ENCODE measurements at regions of chr22 and their contacts with region 1.

Region 1: DNA sequence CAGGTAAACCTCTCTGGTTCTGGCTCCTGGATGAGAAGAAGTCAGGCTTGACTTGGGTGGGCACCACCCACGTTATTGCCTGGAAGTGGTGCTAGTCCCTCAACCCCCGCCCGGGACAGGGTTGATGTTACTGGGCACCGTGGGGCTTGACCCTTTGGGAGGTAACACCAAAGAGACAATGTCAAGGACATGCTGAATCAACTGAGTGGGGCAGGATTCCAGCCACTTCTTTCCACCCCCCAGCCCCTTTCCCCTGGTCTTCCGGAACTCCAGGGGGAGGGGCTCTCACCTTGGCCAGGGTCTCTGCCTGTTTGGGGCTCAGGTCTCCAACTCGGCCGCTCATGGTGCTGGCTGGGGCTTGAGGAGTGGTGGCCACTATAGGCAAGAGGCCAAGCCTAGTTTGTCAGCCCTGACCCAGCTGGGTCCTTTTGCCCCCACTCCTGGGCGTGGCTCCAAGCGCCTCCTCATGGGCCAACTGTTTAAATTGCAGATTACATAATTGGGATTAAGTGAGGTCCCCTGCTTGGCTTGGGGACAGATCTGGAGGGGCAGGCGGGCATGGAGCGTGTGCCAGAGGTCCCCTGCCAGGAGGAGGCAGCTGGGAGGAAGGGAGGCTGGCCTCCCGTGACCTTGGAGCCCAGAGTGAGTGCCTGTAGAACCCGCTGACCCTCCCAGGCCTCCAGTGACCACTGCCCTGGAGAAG is at the start of gene SEC14L3:
- DNase-seq: no peak
- ATAC-seq: no peak
- H3K4me3 ChIP-seq: no peak within 1 kb of the TSS
- H3K27ac ChIP-seq: no peak within 1 kb of the TSS
- H3K4me1 ChIP-seq: no peaks in the 10 kb centered on the region
- H3K27me3 ChIP-seq: peaks cover 0 to 2% of the 10 kb centered on the region in 2 donors
- total RNA-seq, gene SEC14L3: not detected

Region 2: DNA sequence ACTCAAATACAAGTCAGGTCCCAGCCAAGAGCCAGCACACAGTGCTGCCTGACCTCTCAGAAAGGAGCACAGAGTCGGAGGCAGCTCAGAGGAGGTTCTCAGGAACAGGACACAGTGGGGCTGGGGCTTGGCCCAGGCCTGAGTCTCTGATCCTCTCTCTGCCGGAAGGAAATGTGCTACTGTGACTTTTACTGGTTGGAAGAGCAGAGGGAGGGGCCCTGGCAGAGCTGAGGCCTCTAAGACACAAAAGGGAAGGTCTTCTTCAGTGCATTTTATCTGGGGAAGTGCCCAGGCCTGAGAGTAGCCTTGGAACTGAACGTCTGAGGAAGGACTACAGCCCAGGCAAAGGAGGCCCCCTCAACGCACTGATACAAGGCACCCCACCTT is 166.3 kb before region 1 on chr22:
- intact Hi-C with region 1: no loop called
- DNase-seq: peak in 1 of 2 donors; percentile 84
- ATAC-seq: peak; percentile 74
- H3K4me3 ChIP-seq: no peak overlapping the region
- H3K27ac ChIP-seq: peak overlapping the region; percentile 61 to 90
- H3K4me1 ChIP-seq: peaks cover 5 to 11% of the 10 kb centered on the region in 2 donors
- H3K27me3 ChIP-seq: no peaks in the 10 kb centered on the region

Region 3: DNA sequence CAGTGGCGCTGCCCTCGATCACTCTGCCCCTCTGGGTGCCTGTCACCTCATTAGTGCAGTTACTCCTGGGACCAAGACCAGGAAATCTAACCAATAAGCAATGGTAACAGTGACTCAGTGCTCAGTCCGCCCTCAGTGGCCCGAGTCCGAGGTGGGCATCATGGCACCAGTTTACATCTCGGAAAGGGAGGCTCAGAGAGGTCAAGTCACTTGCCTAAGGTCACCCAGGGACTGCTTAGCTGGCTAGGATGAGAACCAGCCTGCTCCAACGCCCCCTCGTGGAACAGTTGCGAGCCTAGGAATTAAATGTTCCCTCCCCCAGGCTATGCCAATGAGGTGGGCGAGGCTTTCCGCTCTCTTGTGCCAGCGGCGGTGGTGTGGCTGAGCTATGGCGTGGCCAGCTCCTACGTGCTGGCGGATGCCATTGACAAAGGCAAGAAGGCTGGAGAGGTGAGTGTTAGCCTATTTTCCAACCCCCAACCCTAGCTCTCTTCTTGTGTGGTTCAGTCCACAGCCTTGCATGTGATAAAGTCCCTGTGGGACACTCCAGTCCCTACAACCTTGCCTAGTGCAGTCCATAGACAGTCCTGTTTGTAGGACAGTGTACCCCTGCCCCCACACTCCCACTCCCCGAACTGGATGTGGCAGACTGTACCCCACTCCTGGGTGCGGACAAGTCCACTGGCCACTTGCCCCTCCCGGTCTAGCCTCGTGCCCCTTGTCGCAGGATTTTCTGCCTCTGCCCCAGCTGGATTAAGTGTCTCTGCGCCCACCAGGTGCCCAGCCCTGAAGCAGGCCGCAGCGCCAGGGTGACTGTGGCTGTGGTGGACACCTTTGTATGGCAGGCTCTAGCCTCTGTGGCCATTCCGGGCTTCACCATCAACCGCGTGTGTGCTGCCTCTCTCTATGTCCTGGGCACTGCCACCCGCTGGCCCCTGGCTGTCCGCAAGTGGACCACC is 45.1 kb before region 1 on chr22:
- intact Hi-C with region 1: no loop called
- DNase-seq: peak; percentile 91 to 94
- ATAC-seq: peak; percentile 17
- H3K4me3 ChIP-seq: no peak overlapping the region
- H3K27ac ChIP-seq: no peak overlapping the region
- H3K4me1 ChIP-seq: no peaks in the 10 kb centered on the region
- H3K27me3 ChIP-seq: no peaks in the 10 kb centered on the region

Region 4: DNA sequence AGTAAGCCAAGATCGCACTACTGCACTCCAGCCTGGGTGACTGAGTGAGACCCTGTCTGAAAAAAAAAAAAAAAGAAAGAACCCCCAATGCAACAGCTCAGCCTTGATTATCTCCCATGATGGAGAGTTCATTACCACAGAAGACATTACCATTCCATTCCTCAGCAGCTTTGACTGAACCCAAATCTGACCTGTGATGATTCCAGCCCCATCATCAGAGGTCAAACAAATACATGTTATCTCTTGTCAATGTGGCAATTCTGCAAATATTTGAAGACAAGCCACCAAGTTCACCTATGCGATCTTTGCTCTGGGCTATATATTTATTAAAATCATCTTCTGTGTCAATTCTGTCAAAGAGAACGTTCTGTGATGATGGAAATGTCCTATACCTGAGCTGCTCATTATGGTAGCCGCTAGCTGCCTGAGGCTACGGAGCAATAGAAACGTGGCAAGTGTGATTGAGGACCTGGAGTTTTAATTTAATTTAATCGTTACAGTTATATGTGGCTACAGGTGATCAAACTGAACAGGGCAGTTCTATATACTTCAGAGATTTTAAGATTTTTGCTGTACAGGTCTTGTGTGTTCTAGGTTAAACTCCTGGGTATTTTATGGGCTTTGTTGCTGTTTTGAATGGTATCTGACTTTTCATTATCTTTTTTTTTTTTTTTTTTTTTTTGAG is 25.8 kb after region 1 on chr22:
- intact Hi-C with region 1: loop called in 1 of 2 experiments (anchors 2 kb)
- DNase-seq: no peak
- ATAC-seq: no peak
- H3K4me3 ChIP-seq: no peak overlapping the region
- H3K27ac ChIP-seq: no peak overlapping the region
- H3K4me1 ChIP-seq: no peaks in the 10 kb centered on the region
- H3K27me3 ChIP-seq: no peaks in the 10 kb centered on the region

Region 5: DNA sequence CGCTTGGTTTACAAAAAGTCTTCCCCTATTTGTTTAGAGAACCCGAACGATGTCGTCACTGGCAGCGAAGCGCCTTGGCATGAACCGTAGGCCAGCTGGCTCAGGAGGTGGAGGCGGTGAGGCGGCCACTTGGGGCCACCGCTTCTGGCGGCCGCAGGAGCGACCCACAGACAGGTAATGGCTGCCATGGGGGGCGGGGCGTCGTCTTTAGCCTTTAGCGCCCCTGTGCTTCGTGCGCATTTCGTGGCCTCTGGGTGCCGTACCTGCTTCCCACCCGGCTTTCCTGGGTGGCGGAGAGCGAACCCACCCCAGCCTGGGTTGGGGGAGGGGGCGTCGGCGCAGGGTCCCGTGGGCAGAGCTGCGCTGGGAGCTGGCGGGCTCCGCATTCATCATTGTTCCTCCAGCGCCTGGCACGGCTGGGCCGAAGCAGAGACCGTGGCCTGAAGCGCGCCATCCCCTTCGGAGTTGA is 222.4 kb after region 1 on chr22:
- intact Hi-C with region 1: no loop called
- DNase-seq: peak; percentile 65 to 81
- ATAC-seq: peak; percentile 49
- H3K4me3 ChIP-seq: peak overlapping the region in 1 of 2 donors; percentile 42
- H3K27ac ChIP-seq: no peak overlapping the region
- H3K4me1 ChIP-seq: no peaks in the 10 kb centered on the region
- H3K27me3 ChIP-seq: no peaks in the 10 kb centered on the region

Measured in aorta (tissue), 5 donors.